Sciatic nerve (tissue), 2 donors: ENCODE measurements at regions of chr3 and their contacts with region 1.

Region 1: DNA sequence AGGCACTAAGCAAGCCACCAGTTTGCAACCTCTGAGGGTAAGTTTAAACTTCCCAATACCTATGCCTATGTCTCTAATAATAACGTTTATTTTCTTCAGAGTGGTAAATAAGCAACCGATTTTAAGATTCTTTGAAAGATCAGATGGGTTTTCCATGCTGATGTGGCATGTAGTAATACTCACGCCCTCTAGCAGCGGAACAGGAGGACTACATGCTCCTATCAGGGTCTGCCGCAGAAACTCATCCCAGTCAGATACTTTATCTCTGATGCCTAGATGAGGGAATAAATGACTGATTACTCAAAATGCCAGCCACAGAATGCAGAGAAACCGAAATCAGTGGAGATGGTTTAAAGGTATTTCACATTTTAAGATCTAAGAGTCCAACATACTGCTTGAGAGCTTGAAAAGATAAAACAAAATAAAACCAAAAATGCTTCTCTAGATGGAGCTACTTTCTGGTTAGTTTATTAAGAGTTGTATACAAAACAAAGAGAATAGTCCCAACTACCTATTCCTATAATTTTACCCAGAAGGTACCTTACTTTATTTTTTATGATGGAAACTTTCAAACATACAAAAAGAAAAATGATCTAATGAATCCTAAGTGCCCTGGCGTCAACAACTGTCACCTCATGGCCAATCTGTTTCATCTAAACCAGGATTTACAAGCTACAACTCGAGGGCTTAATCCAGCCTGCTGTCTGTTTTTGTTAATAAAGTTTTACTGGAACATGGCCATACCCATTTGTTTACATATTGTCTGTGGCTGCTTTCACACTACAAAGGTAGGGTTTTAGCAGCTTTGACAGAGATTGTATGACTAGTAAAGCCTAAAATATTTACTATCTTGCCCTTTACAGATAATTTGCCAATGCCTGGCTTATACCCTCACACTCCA is 37.5 kb upstream of the STIMATE start:
- DNase-seq: no peak
- ATAC-seq: peak; percentile 87

Region 2: DNA sequence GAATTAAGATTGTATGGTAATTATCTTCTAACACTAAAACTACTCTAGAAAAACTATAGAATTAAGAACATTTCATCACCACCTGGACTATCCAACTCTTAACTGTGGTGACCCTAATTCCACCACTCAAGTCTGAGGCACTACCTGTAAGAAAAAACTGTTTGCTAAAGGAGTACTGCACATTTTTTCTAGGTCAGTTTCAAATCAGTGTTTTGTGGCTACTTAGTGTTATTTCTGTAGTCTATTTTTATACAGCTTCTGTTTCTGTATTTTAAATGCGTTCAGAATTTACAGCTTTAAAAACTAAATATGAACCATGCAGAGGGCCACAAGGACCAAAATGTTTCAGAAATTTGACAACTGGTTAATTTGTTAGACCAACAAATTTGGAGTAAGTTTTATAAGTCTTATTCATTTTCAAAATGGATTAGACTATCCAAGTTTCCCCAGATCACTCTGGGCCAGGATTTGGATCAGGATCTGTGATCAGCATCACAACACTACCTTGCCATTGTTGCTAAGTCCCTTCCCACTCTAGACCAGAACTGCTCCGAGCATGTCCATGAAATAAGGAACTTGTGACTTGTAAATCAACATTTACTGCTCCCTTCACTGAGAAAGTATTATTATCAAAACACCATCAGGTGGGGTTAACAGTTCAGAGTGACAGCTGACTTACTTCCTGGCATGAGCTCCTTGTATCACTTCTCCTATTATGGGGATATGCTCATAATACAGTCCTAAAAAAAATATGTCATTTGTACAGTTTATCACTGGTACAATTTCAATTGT is 237.9 kb before region 1 on chr3:
- intact Hi-C with region 1: loop called (anchors 5 kb)
- DNase-seq: no peak
- ATAC-seq: no peak

Region 3: DNA sequence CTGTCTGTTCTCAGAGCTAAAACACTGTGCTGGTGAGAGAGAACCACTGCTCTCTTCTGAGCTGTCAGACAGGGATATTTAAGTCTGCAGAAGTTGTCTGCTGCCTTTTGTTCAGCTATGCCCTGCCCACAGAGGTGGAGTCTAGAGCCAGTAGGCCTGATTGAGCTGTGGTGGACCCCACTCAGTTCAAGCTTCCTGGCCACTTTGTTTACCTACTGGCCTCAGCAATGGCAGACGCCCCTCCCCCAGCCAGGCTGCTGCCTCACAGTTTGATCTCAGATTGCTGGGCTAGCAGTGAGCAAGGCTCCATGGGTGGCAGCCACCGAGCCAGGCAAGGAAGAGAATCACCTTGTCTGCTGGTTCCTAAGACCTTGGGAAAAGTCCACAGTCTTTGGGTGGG is 538.5 kb after region 1 on chr3:
- intact Hi-C with region 1: no loop called
- DNase-seq: no peak
- ATAC-seq: no peak